A549 (cell line): ENCODE measurements at regions of chr16 and their contacts with region 1.

Region 1: DNA sequence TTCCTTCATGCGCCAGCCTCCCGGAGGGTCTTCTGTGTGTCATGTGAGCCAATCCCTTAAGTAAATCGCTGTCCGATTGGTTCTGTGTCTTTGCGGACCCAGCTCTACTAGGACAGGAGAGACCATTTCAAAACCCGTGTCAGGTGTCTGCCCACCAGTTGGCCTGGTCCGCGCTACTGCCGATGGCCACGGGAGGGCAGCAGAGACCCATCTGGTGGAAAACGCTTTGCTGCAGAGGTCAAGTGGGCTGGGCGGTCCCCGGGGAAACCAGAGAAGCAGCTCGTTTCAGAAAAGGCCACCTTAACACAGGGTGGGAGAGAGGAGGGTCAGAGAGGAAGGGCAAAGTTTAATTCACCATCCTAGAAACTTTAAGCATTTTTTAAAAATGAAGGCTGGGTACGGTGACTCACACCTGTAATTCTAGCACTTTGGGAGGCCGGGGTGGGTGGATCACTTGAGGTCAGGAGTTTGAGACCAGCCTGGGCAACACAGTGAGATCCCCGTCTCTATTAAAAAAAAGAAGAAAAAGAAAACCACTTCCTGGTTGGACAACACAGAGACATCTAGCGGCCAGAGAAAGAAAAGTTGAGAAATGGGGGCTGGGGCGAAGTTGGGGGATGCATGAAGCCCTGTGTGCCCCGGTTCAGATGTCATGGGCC is 2.8 kb upstream of the CIBAR2 start:
- DNase-seq: peak; percentile 90 to 96
- ATAC-seq: peak; percentile 92 to 94
- H3K4me3 ChIP-seq: peak overlapping the region; percentile 27; the same call in 2 of the 3 replicates
- H3K27ac ChIP-seq: peak overlapping the region; percentile 73 to 84
- H3K4me1 ChIP-seq: peaks cover 20% of the 10 kb centered on the region
- CTCF ChIP-seq: peak; percentile 90
- EP300 ChIP-seq: no peak
- POLR2A ChIP-seq: no peak
- RAD21 ChIP-seq: peak; percentile 96 to 97

Region 2: DNA sequence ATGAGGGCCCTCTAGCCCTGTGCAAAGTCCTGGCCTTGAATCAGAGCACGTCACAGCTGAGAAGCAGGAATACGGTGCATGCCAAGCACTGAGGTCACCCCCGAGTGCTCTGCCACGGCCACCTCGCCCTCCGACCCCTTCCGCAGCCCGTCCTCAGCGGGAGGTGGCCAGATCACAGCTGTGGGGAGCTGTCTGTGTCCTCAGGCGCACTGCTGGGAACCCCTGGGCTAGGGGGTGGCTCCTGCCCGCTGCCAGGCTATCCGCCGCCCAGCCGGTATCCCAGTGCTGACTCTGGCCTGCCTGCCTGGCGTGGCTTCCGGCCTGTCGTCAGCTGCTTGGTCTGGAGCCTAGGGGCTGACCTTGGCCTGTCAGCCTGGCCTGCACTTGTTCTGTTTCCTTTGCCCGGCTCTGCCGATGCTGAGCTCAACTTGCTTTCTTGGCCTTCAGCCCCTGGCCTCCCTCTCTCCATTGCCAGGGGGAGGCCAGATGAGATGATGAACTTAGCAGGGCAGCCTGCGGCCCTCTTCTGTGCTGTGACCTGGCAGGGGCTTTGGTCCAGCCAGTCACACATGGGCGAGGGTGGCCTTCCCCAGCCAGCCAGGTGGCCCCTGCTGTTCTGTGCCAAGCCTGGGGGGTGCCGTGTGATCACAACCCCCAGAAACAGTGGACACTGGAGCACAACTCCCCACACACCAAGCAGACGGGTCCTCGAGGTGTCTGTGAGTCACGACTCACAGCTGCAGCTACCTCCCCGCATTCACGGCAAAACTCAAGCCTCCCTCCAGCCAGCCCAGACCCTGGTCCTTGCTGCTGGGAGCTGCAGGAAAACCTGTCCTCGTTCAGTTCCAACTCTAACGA is 181.0 kb before region 1 on chr16:
- CTCF ChIA-PET with region 1: no interaction called
- POLR2A ChIA-PET with region 1: no interaction called
- DNase-seq: no peak
- ATAC-seq: no peak
- H3K4me3 ChIP-seq: no peak overlapping the region
- H3K27ac ChIP-seq: no peak overlapping the region
- H3K4me1 ChIP-seq: peaks cover 1% of the 10 kb centered on the region; the same call in 1 of the 3 replicates
- CTCF ChIP-seq: no peak
- EP300 ChIP-seq: no peak
- POLR2A ChIP-seq: no peak
- RAD21 ChIP-seq: no peak

Region 3: DNA sequence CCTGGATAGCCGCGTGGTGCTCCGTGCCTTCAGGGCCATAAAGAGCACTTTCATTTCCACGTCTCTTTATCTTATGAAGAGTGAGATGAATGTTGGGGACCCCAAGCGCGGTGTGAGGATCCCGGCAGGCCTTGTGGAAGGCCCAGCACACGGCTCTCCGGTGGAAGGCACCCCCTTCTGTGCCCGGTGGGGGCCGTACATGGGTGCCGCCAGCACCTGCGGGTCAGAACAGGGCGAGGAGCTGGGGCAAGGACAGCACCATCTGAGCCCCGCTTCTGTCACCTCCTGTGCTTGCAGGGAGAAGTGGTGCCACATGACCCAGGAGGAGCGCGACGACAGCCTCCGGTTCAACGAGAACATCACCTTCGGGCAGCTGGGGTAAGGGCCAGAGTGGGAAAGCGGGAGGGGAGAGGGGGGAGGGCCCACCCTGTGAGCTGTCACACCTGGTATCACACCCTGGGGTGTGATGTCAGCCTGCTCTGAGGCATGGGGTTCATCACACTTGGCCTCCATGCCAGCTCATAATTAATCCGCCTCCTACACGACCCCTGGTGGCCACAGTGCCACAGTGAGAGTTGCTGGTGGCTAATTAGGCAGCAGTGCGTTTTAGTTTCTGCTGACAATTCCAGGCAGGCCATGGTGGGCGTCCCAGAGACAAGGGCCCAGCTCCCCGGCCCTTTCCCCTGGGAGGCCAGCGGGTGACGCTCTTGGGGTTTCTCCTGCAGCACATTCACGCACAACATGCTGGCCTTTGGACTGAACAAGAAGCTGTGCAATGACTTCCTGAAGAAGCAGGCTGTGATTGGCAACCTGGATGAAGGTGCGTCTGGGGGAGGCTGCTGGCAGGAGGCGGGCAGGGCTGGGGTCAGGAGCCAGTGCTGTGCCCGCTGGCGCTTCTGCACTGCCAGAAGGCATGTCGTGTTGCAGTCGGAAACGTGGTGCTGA is 28.4 kb before region 1 on chr16:
- CTCF ChIA-PET with region 1: interaction called, 15 read pairs
- POLR2A ChIA-PET with region 1: no interaction called
- DNase-seq: peak; percentile 70 to 95
- ATAC-seq: peak; percentile 75 to 91
- H3K4me3 ChIP-seq: no peak overlapping the region
- H3K27ac ChIP-seq: peak overlapping the region; percentile 41 to 71; a peak in 4 of 6 replicates
- H3K4me1 ChIP-seq: peaks cover 4% of the 10 kb centered on the region; the same call in 2 of the 3 replicates
- CTCF ChIP-seq: peak; percentile 74
- EP300 ChIP-seq: no peak
- POLR2A ChIP-seq: no peak
- RAD21 ChIP-seq: peak; percentile 76 to 80

Region 4: DNA sequence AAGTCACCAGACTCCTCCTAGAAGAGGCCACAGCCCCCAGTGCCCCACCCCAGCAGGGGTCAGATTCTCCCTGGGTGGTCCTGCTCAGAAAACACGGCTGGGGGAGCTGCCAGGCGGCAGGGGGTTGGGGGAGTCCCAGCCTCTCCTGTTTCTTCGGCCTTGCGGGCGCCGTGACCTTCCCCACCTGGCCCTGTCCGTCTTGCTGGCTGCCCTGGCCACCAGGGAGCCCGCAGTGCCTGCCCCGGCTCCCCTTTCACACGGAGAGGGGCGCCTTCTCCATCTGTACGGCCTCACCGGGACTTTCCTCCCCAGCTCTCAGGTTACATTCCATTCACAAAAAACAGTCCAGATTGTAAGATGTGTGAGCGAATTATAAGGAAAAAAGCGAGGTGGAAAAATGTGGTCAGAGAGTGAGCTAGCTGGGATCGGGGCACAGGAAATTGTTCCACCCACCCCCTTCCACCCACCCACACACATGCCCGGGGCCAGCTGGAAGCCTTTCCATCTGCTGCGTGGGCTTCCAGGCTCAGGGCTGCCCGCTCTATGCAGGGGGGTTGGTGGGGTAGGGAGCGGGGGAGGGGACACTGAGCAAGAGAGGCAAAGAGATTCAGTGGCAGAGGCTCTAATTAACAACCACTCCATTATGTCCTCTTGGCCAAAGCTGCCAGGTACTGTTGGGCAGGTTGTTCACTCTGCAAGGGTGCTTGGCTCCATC is 11.8 kb after region 1 on chr16:
- CTCF ChIA-PET with region 1: interaction called, 59 read pairs
- POLR2A ChIA-PET with region 1: no interaction called
- DNase-seq: no peak
- ATAC-seq: peak in 1 of 2 experiments; percentile 13; a peak in 1 of 6 replicates
- H3K4me3 ChIP-seq: no peak overlapping the region
- H3K27ac ChIP-seq: peak overlapping the region in 1 of 2 experiments; percentile 29; a peak in 1 of 6 replicates
- H3K4me1 ChIP-seq: 0 out of 3 replicates have a peak, but pooled peaks cover 3% of the 10 kb centered on the region
- CTCF ChIP-seq: no peak
- EP300 ChIP-seq: no peak
- POLR2A ChIP-seq: no peak
- RAD21 ChIP-seq: no peak

Region 5: GRCh38 chr16:85168732-85169256 is 53.8 kb after region 1 on chr16:
- CTCF ChIA-PET with region 1: interaction called, 11 read pairs
- POLR2A ChIA-PET with region 1: no interaction called
- DNase-seq: peak in 1 of 2 experiments; percentile 60
- ATAC-seq: 0 out of 6 replicates have a peak, but pooled peaks have one; percentile 5 to 7
- H3K4me3 ChIP-seq: peak overlapping the region; percentile 73
- H3K27ac ChIP-seq: peak overlapping the region; percentile 34 to 92; a peak in 5 of 6 replicates
- H3K4me1 ChIP-seq: peaks cover 44% of the 10 kb centered on the region
- CTCF ChIP-seq: no peak
- EP300 ChIP-seq: no peak
- POLR2A ChIP-seq: no peak
- RAD21 ChIP-seq: no peak

Region 6: DNA sequence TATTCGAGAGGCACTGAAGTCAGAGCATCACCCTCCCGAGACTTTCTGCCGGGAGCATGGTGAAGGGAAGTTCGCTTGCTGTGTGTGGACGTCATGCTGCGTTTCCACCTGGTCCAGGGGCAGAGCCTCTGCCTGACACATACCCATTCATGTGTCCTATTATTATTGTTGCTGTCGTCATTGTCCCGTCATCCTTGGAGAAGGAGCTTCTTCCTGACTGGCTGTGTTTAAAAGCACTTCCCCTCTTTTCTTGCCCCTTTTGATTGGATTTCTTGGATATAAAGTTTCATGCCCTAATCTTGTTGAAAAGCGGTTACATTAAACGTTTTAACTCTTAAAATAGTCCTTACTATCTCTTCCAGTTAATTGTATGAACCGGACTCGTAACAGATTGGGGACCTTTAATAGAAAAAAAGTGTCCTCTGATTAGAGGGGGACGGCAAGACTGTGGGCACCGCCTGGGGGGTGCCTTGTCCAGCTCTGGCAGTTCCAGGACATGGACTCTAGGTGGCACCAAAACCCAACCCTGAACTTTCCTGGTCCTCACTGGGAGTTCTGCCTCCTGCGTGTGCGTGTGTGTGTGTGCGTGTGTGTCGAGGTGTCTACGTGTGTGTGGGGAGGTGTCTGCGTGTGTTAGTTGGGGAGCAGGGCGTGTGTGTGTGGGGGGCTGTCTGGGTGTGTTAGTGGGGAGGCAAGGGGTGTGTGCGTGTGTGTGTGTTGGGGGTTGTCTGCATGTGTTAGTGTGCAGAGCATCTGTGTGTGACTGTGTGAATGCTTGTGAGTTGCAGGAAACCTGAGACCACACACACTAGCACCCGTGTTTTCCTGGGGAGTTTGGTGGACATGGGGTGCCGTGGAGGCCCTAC is 130.5 kb after region 1 on chr16:
- CTCF ChIA-PET with region 1: interaction called, 14 read pairs
- POLR2A ChIA-PET with region 1: no interaction called
- DNase-seq: peak; percentile 69
- ATAC-seq: peak; percentile 72 to 89
- H3K4me3 ChIP-seq: no peak overlapping the region
- H3K27ac ChIP-seq: no peak overlapping the region
- H3K4me1 ChIP-seq: no peaks in the 10 kb centered on the region
- CTCF ChIP-seq: peak; percentile 73
- EP300 ChIP-seq: no peak
- POLR2A ChIP-seq: no peak
- RAD21 ChIP-seq: peak; percentile 59 to 67

Region 7: GRCh38 chr16:85270374-85270773 is 155.3 kb after region 1 on chr16:
- CTCF ChIA-PET with region 1: interaction called, 19 read pairs
- POLR2A ChIA-PET with region 1: no interaction called
- DNase-seq: no peak
- ATAC-seq: no peak
- H3K4me3 ChIP-seq: no peak overlapping the region
- H3K27ac ChIP-seq: no peak overlapping the region
- H3K4me1 ChIP-seq: no peaks in the 10 kb centered on the region
- CTCF ChIP-seq: no peak
- EP300 ChIP-seq: no peak
- POLR2A ChIP-seq: no peak
- RAD21 ChIP-seq: no peak

Region 8: DNA sequence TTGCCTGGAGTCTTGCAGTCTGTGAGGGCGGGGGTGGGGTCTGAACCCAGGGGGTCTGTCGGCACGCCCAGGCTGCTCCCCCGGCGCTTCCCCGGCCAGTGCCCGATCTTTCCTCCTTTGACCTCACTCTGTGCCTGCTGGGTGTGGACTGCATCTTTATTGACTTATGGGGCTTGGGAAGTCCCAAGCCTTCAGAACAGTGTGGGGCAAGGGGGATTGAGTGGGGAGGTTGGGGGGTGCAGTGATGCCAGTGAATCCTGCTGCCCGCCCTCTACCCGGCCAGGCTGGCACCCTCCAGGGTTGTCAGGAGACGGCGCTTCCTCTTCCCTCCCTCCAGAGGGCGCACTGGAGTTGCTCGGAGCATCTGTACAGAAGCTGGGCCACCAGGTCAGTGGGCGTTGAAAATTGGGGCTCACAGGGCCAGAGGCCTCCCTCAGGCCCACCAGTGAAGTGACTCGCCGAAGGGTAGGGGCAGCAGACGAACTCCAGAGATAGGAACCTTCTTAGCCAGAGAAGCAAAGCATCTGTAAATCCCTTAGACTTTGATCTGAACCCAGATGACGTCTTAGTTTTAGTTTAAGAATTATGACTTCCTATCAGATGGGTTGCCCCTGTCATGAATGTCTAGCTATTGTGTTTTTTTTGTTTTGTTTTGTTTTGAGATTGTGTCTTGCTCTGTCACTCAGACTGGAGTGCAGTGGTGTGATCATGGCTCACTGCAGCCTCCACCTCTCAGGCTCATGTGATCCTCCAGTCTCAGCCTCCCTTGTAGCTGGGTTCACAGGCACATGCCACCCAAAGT is 182.0 kb after region 1 on chr16:
- CTCF ChIA-PET with region 1: interaction called, 16 read pairs
- POLR2A ChIA-PET with region 1: no interaction called
- DNase-seq: peak; percentile 53 to 79
- ATAC-seq: peak; percentile 88 to 98
- H3K4me3 ChIP-seq: no peak overlapping the region
- H3K27ac ChIP-seq: no peak overlapping the region
- H3K4me1 ChIP-seq: peaks cover 7% of the 10 kb centered on the region; the same call in 2 of the 3 replicates
- CTCF ChIP-seq: peak; percentile 64
- EP300 ChIP-seq: no peak
- POLR2A ChIP-seq: no peak
- RAD21 ChIP-seq: peak; percentile 33 to 42; a peak in 3 of 5 replicates